ENCODE measurements at regions of chr18 and their contacts with region 1.

Region 1: DNA sequence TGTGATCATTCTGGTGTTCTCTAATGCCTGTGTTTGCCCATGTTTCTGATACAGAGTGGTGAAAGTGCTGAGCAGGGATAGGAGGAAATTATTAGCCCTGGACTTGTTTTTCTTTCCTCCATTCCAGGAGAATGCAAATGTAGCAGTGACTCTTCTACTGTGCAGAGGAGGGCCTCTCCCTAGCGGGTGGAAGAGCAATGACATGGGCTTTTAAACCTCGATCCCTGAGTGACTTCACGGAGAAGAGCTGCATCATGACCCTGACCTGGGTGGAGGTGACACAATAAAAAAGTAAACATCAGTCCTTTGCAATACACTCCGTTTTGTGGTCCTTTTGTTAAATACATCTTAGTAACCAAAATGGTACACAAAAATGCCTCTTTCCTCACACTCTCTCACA is 68.0 kb upstream of the NETO1 start:
- DNase-seq: no peak
- ATAC-seq: no peak
- H3K4me3 ChIP-seq: no peak overlapping the region
- H3K27ac ChIP-seq: no peak overlapping the region
- H3K4me1 ChIP-seq: no peaks in the 10 kb centered on the region
- H3K27me3 ChIP-seq: no peaks in the 10 kb centered on the region
- CTCF ChIP-seq: no peak

Region 2: DNA sequence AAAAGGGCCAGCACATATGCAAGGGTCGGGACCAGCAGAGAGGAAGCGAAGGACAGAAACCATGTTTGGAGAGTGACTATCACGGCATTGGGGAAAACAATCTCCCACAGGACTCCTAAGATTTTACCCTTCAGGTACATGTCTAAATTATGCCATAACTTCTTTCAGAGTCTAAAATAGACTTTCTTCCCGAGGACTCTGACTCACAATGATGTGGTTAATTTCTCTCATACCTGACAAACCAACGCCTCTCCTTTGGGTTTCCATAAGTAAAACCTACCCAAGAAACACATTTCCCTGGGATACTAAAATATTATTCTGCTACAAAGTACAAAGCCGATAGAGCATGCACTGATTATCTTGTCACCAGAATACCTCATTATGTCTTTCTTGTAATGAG is 59.8 kb after region 1 on chr18:
- intact Hi-C with region 1: loop called in 1 of 3 experiments (anchors 10 kb)
- DNase-seq: no peak
- ATAC-seq: no peak
- H3K4me3 ChIP-seq: no peak overlapping the region
- H3K27ac ChIP-seq: no peak overlapping the region
- H3K4me1 ChIP-seq: no peaks in the 10 kb centered on the region
- H3K27me3 ChIP-seq: no peaks in the 10 kb centered on the region
- CTCF ChIP-seq: no peak

Region 3: DNA sequence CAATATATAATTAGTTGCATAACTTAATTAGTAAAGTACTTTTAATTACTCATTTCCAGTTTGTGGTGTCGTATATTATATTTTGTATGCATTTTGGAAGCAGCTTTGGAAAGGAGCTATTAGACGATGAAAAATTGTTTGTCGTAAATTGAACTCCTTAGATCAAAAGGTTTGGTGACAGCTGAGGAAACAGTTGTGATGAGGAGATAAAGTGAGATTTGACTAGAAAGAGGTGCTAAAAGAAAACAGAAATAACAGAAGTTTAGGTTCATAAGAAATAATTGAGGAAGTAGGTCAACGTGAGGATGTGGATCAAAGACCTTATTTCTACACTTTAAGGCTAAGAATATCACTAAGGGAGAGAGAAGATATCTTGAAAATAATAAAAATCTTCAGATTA is 73.9 kb after region 1 on chr18:
- intact Hi-C with region 1: no loop called
- DNase-seq: no peak
- ATAC-seq: no peak
- H3K4me3 ChIP-seq: no peak overlapping the region
- H3K27ac ChIP-seq: no peak overlapping the region
- H3K4me1 ChIP-seq: no peaks in the 10 kb centered on the region
- H3K27me3 ChIP-seq: no peaks in the 10 kb centered on the region
- CTCF ChIP-seq: no peak

Region 4: DNA sequence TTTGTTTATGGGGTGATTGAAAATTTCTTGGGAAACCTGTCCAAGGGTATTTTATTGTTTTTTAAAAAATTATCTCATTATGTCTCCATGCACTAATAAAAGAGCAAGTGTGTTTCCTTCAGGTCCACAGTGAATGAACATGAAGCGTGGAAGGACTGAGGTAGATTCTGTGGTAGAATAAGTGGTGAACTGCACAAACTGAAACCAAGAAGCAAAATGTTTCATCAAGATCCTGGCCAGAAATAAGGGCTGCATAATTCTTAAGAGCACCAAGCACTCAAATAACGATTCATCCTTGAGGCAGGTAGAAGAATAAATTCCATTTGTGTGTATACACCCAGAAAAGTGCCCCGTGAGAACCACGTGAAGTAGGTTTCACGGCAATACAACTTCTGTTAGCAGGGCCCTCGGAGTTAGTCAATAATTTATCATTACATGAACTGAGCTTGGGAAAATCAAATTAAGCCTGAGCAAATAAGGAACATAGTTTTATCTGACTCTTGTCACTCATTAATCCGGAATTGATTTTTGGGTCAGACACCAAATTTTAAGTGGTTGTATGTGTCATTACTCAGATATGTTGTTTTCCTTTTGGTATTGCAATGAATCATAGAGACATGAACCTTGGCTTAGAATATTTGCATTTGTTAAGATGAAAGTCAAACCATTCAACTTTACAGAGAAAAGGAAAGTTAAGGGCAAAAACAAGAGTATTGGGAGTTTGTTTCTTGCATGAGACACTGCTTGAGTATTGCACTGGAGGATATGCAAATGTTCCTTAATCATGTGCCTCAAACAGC is 404.6 kb after region 1 on chr18:
- intact Hi-C with region 1: no loop called
- DNase-seq: peak in 4 of 6 donors; percentile 13 to 33 (median 25)
- ATAC-seq: peak; percentile 78 to 94 (median 84)
- H3K4me3 ChIP-seq: peak overlapping the region in 2 of 4 donors; percentile 1 to 22
- H3K27ac ChIP-seq: peak overlapping the region in 1 of 4 donors; percentile 36
- H3K4me1 ChIP-seq: peaks cover 0 to 13% (median 0%) of the 10 kb centered on the region in 3 donors
- H3K27me3 ChIP-seq: no peaks in the 10 kb centered on the region
- CTCF ChIP-seq: no peak

Measured in pancreas (tissue), 10 donors.